Adrenal gland (tissue), 19 donors: ENCODE measurements at regions of chr5 and their contacts with region 1.

Region 1: GRCh38 chr5:72138943-72139521 is 31.8 kb downstream of the MAP1B start:
- DNase-seq: peak; percentile 30 to 63 (median 51)
- H3K4me3 ChIP-seq: peak overlapping the region in 2 of 4 donors; percentile 11 to 24
- H3K27ac ChIP-seq: peak overlapping the region in 4 of 5 donors; percentile 36 to 73 (median 67)
- H3K4me1 ChIP-seq: peaks cover 31 to 39% of the 10 kb centered on the region in 2 donors
- H3K27me3 ChIP-seq: no peaks in the 10 kb centered on the region
- CTCF ChIP-seq: no peak
- POLR2A ChIP-seq: no peak

Region 2: DNA sequence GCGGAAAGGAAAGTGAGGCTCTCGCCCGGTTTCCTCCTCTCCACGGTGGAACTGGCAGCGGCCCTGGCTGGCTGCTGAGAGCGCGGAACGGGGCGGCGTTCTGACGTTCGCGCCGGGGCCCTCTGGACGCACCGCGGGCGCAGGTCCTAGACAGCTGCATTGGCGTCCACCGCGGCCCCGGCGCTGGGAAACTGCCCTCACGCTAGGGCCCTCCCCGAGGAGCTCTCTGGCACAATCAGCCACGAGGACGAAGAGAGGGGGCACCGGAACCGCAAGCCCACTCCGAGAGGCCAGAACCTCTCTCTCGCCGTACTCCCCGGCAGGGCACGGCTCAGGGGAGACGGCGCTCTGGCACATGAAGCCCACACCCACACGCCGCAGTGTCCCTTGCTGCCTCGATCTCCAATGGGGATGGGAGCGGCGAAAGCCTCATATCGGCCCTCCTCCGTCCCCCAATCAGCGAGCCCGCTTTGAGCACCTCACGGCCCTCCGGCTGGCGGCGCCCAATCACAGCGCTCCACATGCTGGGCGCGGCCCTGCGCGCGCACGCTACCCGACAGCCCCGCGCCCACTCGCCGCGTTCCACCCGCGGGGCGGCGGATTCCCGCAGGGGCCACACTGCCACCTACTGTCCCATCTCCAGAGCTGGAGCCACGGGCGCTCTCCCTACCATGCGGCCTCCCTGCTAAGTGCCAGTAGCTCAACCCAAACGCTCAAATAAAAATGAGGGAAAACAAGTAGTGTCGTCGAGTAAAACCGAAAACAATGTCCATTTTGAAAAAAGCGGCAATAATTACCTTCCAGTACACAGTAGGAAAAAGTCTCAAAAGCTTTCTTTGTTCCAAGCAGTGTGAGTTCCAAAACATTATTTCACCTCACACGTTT is 169.2 kb after region 1 on chr5:
- intact Hi-C with region 1: loop called (anchors 10 kb)
- DNase-seq: peak; percentile 97 to 99 (median 99)
- H3K4me3 ChIP-seq: peak overlapping the region; percentile 1 to 84 (median 56)
- H3K27ac ChIP-seq: peak overlapping the region; percentile 66 to 96 (median 93)
- H3K4me1 ChIP-seq: peaks cover 12 to 14% of the 10 kb centered on the region in 2 donors
- H3K27me3 ChIP-seq: no peaks in the 10 kb centered on the region
- CTCF ChIP-seq: peak; percentile 73 to 96 (median 92)
- POLR2A ChIP-seq: peak; percentile 93 to 99